Psoas muscle (tissue), 8 donors: ENCODE measurements at regions of chr1 and their contacts with region 1.

Region 1: DNA sequence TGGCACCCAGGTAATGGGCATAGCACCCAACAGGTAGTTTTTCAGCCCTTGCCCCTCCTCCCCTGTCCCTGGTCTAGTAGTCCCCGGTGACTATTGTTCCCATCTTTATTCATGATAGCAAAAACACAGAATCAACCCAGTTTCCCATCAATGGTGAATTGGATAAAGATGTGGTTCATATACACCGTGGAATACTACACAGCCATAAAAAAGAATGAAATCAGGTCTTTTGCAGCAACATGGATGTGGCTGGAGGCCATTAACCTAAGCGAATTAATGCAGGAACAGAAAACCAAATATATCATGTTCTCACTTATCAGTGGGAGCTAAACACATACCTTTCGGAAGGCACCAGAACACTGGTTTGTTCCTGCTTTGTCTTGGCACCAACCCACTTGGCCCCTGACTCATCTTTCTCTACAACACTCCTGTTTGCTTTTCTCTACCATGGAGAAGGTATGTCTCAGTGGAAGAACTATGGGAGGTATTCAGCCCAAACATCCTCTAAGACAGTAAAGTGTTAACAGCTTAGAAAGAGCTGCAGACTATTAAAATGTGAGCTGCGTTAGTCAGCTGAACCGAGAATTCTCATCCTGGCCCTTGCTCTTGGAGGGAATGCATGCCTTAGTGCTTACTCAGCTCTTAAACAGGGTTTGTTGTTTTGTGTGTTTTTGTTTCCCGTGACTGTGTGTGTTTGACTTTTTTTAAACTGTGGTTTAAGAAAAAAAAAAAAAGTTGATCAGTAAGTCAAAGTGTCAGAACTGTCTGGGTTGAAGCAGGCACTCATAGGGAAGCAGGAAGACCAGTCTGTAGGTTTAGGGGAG is 203.0 kb downstream of the TOMM20 start:
- DNase-seq: no peak
- ATAC-seq: peak; percentile 65 to 80 (median 76)
- H3K4me3 ChIP-seq: no peak overlapping the region
- H3K27ac ChIP-seq: peak overlapping the region; percentile 61
- H3K4me1 ChIP-seq: peaks cover 30% of the 10 kb centered on the region
- H3K27me3 ChIP-seq: no peaks in the 10 kb centered on the region
- CTCF ChIP-seq: no peak

Region 2: GRCh38 chr1:234579967-234580366 is 345.7 kb before region 1 on chr1:
- intact Hi-C with region 1: no loop called
- DNase-seq: no peak
- ATAC-seq: no peak
- H3K4me3 ChIP-seq: no peak overlapping the region
- H3K27ac ChIP-seq: peak overlapping the region; percentile 97
- H3K4me1 ChIP-seq: peaks cover 37% of the 10 kb centered on the region
- H3K27me3 ChIP-seq: no peaks in the 10 kb centered on the region
- CTCF ChIP-seq: peak; percentile 24

Region 3: GRCh38 chr1:234758851-234759250 is 166.8 kb before region 1 on chr1:
- intact Hi-C with region 1: no loop called
- DNase-seq: no peak
- ATAC-seq: no peak
- H3K4me3 ChIP-seq: no peak overlapping the region
- H3K27ac ChIP-seq: no peak overlapping the region
- H3K4me1 ChIP-seq: peaks cover 9% of the 10 kb centered on the region
- H3K27me3 ChIP-seq: no peaks in the 10 kb centered on the region
- CTCF ChIP-seq: no peak

Region 4: DNA sequence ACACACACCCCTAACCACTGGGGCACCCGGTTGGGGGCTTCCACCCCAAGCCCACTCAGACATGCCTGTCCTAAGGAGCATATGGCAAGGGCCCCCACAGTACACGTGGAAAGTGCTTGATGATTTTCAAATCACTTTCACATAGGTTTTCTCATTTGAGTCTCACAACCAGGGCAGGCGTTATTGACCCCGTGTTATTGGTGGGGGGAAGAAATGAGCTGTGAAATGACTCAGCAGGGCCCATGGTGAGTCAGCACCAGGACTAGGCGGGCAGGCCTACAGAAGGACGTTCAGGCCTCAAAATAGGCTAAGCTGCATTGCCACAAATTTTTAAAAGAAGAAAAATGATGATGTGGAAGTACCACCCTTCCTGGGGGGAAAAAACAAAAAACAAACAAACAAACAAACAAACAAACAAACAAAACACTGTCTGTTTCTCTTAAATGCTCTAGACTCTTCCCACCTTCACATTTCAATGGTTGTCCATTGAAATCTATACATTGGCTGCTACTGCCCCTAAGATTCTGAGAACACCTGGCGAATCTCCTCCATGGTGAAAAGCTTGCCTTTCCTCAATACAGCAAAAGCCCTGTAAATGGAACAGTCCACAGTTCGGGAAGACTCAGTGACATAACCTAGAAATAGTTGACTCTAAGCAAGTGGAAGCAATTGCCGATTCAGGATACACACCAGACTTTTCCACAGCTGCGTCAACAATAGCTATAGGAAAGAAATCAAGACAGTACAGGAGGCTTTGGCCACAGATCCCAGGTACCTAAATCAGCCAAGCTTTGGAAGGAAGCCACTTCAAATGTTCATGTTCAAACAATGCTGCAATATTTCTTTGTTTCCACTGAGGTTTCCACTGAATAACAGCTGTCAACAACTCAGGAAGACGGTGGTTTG is 31.7 kb before region 1 on chr1:
- intact Hi-C with region 1: no loop called
- DNase-seq: no peak
- ATAC-seq: peak in 1 of 4 donors; percentile 41
- H3K4me3 ChIP-seq: no peak overlapping the region
- H3K27ac ChIP-seq: peak overlapping the region; percentile 62
- H3K4me1 ChIP-seq: peaks cover 23% of the 10 kb centered on the region
- H3K27me3 ChIP-seq: no peaks in the 10 kb centered on the region
- CTCF ChIP-seq: no peak

Region 5: DNA sequence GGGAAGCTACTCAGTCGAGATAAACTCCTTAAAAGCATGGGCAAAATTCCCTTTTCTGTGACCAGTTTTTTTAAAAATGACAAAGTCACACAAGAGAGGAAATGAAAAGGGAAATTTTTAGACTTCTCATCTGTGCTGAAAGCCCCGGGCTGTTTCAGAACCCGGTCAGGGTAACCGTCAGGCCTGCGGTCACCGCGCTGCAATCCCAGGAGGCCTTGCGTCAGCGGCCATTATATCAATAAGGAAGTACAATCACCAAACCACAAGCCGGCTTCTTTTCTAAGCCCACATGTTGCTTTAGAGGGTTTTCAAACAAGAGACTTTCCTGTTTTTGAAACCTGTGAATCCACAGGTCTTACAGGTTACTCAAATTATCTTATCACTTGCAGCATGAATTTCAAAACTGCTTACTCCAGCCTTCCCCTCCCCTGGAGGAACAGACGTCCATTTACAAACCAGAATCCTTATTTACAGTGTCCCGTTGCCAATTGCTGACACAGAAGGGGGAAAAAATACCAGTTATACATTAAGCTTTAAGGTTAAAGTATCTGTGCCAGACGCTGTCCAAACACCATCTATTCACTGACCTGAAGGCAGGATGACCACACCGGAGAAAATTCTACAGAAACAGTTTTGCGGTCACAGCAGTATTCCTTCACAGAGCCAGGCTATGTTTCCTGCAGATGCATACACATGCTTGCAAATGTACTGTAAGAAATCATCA is 37.7 kb after region 1 on chr1:
- intact Hi-C with region 1: loop called in 1 of 2 experiments (anchors 5 kb)
- DNase-seq: peak; percentile 80 to 90
- ATAC-seq: peak in 2 of 4 donors; percentile 39 to 44
- H3K4me3 ChIP-seq: no peak overlapping the region
- H3K27ac ChIP-seq: peak overlapping the region; percentile 70
- H3K4me1 ChIP-seq: peaks cover 46% of the 10 kb centered on the region
- H3K27me3 ChIP-seq: no peaks in the 10 kb centered on the region
- CTCF ChIP-seq: no peak

Region 6: DNA sequence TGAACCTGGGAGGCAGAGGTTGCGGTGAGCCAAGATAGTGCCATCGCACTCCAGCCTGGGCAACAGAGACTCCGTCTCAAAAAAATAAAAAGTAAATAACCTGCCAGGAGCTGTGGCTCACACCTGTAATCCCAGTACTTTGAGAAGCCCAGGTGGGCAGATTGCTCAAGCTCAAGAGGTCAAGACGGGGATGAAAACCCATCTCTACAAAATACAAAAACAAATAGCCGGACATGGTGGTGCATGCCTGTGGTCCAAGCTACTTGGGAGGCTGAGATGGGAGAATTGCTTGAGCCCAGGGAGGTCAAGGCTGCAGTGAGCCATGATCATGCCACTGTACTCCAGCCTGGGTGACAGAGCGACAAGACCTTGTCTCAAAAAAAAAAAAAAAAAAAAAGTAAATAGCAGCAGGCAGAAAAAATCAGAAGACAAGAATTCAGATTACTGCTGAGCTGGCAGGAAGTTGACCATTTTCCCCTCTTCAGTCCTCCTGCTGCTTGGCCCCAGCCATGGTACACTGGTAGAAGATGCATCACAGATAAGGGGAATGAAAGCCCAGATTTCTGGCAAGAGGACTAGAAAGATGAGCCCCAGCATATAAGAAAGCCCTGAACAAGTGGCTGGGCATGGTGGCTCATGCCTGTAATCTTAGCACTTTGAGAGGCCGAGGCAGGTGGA is 105.4 kb after region 1 on chr1:
- intact Hi-C with region 1: no loop called
- DNase-seq: no peak
- ATAC-seq: no peak
- H3K4me3 ChIP-seq: no peak overlapping the region
- H3K27ac ChIP-seq: no peak overlapping the region
- H3K4me1 ChIP-seq: no peaks in the 10 kb centered on the region
- H3K27me3 ChIP-seq: no peaks in the 10 kb centered on the region
- CTCF ChIP-seq: no peak